ENCODE measurements at regions of chr6 and their contacts with region 1.

Region 1: GRCh38 chr6:71537717-71538116 is 249.1 kb downstream of the OGFRL1 start:
- DNase-seq: no peak
- CTCF ChIP-seq: no peak

Region 2: DNA sequence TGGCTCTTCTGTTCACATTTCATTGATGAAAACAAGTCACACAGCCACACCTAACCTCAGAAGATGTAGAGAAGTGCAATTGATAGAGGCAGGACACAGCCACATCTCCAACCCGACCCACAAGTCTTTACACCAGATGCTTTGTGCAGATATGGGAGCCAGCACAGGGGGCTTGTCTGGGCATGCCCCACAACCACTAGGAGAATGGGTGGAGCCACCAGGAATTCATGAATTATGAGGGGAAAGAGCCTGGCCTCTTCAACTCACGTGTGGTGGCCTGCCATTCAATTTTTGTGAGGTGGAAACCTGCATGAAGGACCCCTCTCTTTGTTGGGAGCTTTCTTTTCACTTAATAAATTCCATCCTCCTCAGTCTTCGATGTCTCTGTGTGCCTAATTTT is 170.0 kb before region 1 on chr6:
- CTCF ChIA-PET with region 1: no interaction called
- POLR2A ChIA-PET with region 1: no interaction called
- DNase-seq: no peak
- CTCF ChIP-seq: no peak

Region 3: DNA sequence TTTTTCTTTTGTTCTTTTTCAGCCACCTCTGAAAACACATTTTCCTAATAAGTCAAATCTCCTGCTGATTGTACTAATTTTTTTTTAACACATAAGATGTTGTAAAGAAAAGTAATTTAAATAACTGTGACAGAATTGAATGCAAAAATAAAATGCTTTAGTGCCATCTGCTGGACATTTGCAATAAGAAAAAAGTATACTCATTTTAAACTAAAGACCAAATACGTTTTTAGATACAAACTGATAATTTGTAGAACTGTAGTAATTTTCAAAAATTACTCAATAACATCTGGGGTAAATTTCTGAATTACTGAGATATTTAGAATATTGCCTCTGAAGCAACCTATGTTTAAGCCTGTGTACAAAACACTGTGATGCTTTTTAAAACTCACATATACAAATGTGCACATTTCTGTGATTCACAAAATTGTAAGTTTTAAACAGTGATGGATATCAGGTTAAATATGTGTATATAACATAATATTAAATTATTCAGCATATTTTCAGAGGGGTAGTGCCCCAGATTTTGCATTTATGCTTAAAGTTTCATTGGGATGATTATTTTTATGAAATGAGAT is 547.4 kb after region 1 on chr6:
- CTCF ChIA-PET with region 1: interaction called, 11 read pairs
- POLR2A ChIA-PET with region 1: no interaction called
- DNase-seq: no peak
- CTCF ChIP-seq: peak; percentile 25